ENCODE measurements at regions of chr1 and their contacts with region 1.

Region 1: DNA sequence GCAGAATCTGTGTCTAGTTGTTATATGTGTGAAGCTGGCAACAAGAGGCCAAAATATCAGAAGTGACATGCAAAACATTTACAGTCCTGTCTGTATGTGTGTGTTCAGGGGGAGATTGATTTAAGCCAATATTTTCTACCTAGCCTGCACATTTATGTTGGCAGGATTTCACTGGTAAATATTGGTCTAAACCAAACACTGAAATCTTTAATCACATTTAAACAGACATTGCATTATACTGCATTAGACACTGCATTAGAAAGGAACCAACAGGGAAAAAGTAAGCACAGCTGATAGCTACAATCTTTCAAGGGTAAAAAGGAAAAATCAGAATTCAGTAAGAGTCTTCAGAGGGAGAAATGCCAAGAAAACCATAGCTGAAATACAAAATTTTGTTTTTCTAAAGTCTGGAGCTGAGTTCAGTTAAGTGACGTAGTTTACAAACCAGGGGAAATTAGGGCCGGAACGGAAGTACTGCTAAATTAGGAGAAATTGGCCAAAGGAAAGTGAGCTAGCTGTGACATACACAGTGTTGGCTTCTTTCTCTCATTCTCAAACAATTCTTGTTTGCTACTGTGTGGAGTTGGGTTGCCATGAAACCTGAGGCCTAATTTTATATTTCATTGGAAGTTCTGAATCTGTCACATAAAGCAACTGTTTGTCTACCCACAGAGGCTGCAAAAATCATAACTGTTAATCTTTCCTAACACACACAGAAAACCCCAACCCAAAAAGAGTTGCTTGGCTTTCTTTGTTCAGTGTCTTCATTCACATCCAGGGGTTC is 217.3 kb upstream of the SGIP1 start:
- DNase-seq: peak; percentile 23
- ATAC-seq: no peak
- H3K4me3 ChIP-seq: no peak overlapping the region
- H3K27ac ChIP-seq: no peak overlapping the region
- H3K4me1 ChIP-seq: peaks cover 1% of the 10 kb centered on the region
- H3K27me3 ChIP-seq: no peaks in the 10 kb centered on the region
- CTCF ChIP-seq: no peak
- POLR2A ChIP-seq: no peak
- RAD21 ChIP-seq: no peak

Region 2: DNA sequence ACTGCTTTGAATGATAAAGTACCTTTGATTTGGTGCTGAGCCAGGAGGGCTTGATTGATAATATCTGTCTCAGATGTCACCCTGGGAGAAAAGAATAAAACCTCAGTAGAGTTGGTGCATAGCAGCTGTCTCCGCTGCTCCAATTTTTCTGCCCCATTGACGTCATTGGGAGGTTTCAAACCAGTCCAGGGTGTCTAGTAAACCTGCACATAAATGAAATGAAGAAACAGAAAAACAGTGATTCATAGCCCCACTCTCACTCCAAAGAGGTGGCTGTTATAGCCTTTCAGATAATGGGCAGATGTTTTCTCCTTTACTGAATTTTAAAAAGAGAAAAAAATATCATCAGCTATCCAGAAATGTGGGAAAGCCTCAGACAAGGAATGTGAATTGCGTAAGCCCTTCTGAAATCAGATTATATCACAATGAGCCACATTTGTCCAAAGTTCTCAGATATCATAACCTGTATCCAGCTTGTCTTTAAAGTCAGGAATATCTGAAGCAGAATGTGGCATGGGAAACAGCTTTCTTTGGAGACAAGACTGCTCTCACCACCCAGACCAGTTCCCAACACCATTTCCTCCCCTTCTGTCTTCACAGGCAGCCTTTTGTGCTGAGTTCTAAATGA is 134.0 kb before region 1 on chr1:
- CTCF ChIA-PET with region 1: no interaction called
- POLR2A ChIA-PET with region 1: no interaction called
- dilution Hi-C with region 1: no loop called
- in situ Hi-C with region 1: no loop called
- intact Hi-C with region 1: no loop called
- DNase-seq: peak; percentile 81
- ATAC-seq: no peak; the same call in none of the 2 replicates
- H3K4me3 ChIP-seq: no peak overlapping the region
- H3K27ac ChIP-seq: no peak overlapping the region
- H3K4me1 ChIP-seq: peaks cover 1% of the 10 kb centered on the region; the same call in 1 of the 2 replicates
- H3K27me3 ChIP-seq: no peaks in the 10 kb centered on the region
- CTCF ChIP-seq: no peak
- POLR2A ChIP-seq: no peak
- RAD21 ChIP-seq: no peak

Region 3: GRCh38 chr1:66282343-66282852 is 34.3 kb before region 1 on chr1:
- CTCF ChIA-PET with region 1: no interaction called
- POLR2A ChIA-PET with region 1: no interaction called
- dilution Hi-C with region 1: no loop called
- in situ Hi-C with region 1: no loop called
- intact Hi-C with region 1: loop called (anchors 5 kb)
- DNase-seq: peak; percentile 95
- ATAC-seq: peak; percentile 68
- H3K4me3 ChIP-seq: no peak overlapping the region
- H3K27ac ChIP-seq: no peak overlapping the region
- H3K4me1 ChIP-seq: peaks cover 4% of the 10 kb centered on the region
- H3K27me3 ChIP-seq: no peaks in the 10 kb centered on the region
- CTCF ChIP-seq: no peak; the same call in 1 of the 2 replicates
- POLR2A ChIP-seq: no peak
- RAD21 ChIP-seq: peak; percentile 30; the same call in 1 of the 2 replicates

Region 4: GRCh38 chr1:66393586-66394287 is 77.1 kb after region 1 on chr1:
- CTCF ChIA-PET with region 1: no interaction called
- POLR2A ChIA-PET with region 1: no interaction called
- dilution Hi-C with region 1: no loop called
- in situ Hi-C with region 1: no loop called
- intact Hi-C with region 1: no loop called
- DNase-seq: no peak
- ATAC-seq: no peak
- H3K4me3 ChIP-seq: no peak overlapping the region
- H3K27ac ChIP-seq: no peak overlapping the region
- H3K4me1 ChIP-seq: peaks cover 2% of the 10 kb centered on the region; the same call in 1 of the 2 replicates
- H3K27me3 ChIP-seq: no peaks in the 10 kb centered on the region
- CTCF ChIP-seq: no peak
- POLR2A ChIP-seq: no peak
- RAD21 ChIP-seq: no peak

Region 5: GRCh38 chr1:66446261-66447001 is 129.8 kb after region 1 on chr1:
- CTCF ChIA-PET with region 1: no interaction called
- POLR2A ChIA-PET with region 1: no interaction called
- dilution Hi-C with region 1: no loop called
- in situ Hi-C with region 1: no loop called
- intact Hi-C with region 1: no loop called
- DNase-seq: peak; percentile 76
- ATAC-seq: peak; percentile 73
- H3K4me3 ChIP-seq: no peak overlapping the region
- H3K27ac ChIP-seq: no peak overlapping the region
- H3K4me1 ChIP-seq: peaks cover 7% of the 10 kb centered on the region
- H3K27me3 ChIP-seq: no peaks in the 10 kb centered on the region
- CTCF ChIP-seq: peak; percentile 98
- POLR2A ChIP-seq: peak; percentile 59
- RAD21 ChIP-seq: peak; percentile 98

Region 6: DNA sequence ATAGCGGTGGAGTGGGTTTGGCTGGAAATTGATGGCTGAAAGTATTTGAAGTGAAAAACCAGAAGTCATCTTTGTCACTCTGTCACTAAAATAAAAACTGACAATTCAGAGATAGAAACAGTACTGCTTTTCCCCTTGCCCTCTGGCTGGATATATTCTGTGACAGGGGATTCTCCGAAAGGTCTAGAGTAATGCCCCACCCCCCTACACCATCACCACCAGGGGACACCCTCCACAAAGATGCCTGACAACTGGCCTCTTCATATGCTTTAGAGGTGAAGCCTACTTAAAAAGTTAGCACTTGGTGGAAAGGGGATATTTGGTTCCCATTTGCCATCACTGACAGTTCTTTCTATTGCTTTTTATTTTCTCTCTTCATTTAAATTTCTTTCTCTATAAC is 290.8 kb after region 1 on chr1:
- CTCF ChIA-PET with region 1: no interaction called
- POLR2A ChIA-PET with region 1: no interaction called
- dilution Hi-C with region 1: no loop called
- in situ Hi-C with region 1: no loop called
- intact Hi-C with region 1: no loop called
- DNase-seq: no peak
- ATAC-seq: no peak
- H3K4me3 ChIP-seq: no peak overlapping the region
- H3K27ac ChIP-seq: peak overlapping the region; percentile 57; the same call in 1 of the 2 replicates
- H3K4me1 ChIP-seq: peaks cover 12% of the 10 kb centered on the region
- H3K27me3 ChIP-seq: no peaks in the 10 kb centered on the region
- CTCF ChIP-seq: no peak
- POLR2A ChIP-seq: no peak
- RAD21 ChIP-seq: no peak

Measured in IMR-90 (cell line).